CD8-positive, alpha-beta T cell (primary cell): ENCODE measurements at regions of chrX and their contacts with region 1.

Region 1: GRCh38 chrX:1537035-1537715 is at the start of gene P2RY8:
- DNase-seq: peak; percentile 65 to 91 (median 82)
- ATAC-seq: peak; percentile 76
- H3K4me3 ChIP-seq: peak within 1 kb of the TSS; percentile 71 to 98
- H3K4me3 Mint-ChIP-seq: peak within 1 kb of the TSS; percentile 98
- H3K27ac ChIP-seq: peak within 1 kb of the TSS; percentile 91 to 92
- H3K27ac Mint-ChIP-seq: peak within 1 kb of the TSS; percentile 98
- H3K4me1 ChIP-seq: peaks cover 15% of the 10 kb centered on the region
- H3K4me1 Mint-ChIP-seq: peaks cover 20% of the 10 kb centered on the region
- H3K27me3 ChIP-seq: no peaks in the 10 kb centered on the region
- H3K27me3 Mint-ChIP-seq: no peaks in the 10 kb centered on the region
- CTCF ChIP-seq: no peak
- total RNA-seq, gene P2RY8: 196 to 197 TPM

Region 2: GRCh38 chrX:1246816-1247215 is 290.4 kb before region 1 on chrX:
- CTCF ChIA-PET with region 1: no interaction called
- POLR2A ChIA-PET with region 1: no interaction called
- intact Hi-C with region 1: loop called in 1 of 2 experiments (anchors 5 kb)
- DNase-seq: peak; percentile 59 to 89 (median 74)
- ATAC-seq: peak; percentile 67
- H3K4me3 ChIP-seq: no peak overlapping the region
- H3K4me3 Mint-ChIP-seq: no peak overlapping the region
- H3K27ac ChIP-seq: no peak overlapping the region
- H3K27ac Mint-ChIP-seq: peak overlapping the region; percentile 27
- H3K4me1 ChIP-seq: peaks cover 16% of the 10 kb centered on the region
- H3K4me1 Mint-ChIP-seq: peaks cover 15% of the 10 kb centered on the region
- H3K27me3 ChIP-seq: no peaks in the 10 kb centered on the region
- H3K27me3 Mint-ChIP-seq: no peaks in the 10 kb centered on the region
- CTCF ChIP-seq: peak; percentile 75

Region 3: DNA sequence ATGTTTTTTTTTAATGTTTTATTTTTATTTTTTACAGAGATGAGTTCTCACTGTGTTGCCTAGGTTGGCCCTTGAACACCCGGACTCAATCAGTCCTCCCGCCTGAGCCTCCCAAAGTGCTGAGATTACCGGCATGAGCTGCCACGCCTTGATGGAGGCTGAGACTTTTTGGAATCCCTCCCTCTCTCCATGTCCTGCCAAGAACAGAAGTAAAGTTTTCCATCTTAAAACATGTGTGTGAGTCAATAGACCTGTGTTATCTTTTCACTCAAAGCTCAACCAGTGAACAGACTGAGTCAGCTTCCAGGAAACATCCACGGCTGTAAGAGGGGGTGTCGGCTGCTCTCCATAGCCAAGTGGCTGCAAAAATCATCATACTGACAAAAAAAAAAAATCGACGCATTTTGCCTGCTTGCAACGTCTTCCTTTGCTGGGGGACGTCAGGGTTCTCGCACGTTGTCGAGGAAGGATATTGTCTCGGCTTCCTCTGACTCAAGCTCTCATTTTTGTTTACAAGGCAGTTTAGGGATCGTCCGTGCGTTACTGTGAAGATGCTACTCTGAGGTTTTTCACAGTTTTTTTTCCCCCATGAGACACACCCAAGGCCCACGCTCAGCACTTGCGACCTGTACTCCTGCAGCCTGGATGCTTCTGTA is 74.5 kb before region 1 on chrX:
- CTCF ChIA-PET with region 1: no interaction called
- POLR2A ChIA-PET with region 1: no interaction called
- intact Hi-C with region 1: loop called (anchors 2 kb)
- DNase-seq: peak; percentile 56 to 98 (median 75)
- ATAC-seq: peak; percentile 75
- H3K4me3 ChIP-seq: peak overlapping the region in 1 of 2 experiments; percentile 5
- H3K4me3 Mint-ChIP-seq: peak overlapping the region; percentile 23
- H3K27ac ChIP-seq: peak overlapping the region; percentile 63 to 92
- H3K27ac Mint-ChIP-seq: peak overlapping the region; percentile 95
- H3K4me1 ChIP-seq: peaks cover 54% of the 10 kb centered on the region
- H3K4me1 Mint-ChIP-seq: peaks cover 57% of the 10 kb centered on the region
- H3K27me3 ChIP-seq: no peaks in the 10 kb centered on the region
- H3K27me3 Mint-ChIP-seq: no peaks in the 10 kb centered on the region
- CTCF ChIP-seq: no peak

Region 4: DNA sequence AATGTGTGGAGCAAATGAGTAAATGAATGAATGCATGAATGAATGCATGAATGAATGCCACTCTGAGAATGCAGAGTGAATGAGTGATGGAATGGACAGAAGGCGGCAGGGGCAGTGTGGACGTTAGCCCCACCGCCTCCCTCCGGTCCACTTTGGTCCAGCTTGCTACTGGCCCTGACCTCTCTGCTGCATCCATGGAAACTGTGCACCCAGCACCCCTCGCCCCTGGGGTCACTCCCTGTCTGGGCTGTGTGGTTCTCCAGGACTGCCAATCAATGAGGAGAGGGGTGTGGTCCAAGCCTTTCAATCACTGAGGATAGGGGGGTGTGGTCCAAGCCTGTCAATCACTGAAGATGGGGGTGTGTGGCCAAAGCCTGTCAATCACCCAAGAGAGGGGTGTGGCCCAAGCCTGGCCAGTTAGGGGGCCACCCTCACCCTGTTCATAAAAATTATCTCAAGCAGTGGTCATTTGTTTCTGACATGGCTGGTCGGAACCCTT is 45.3 kb before region 1 on chrX:
- CTCF ChIA-PET with region 1: no interaction called
- POLR2A ChIA-PET with region 1: no interaction called
- intact Hi-C with region 1: loop called (anchors 1 to 5 kb)
- DNase-seq: peak in 5 of 9 experiments; percentile 41 to 78 (median 68)
- ATAC-seq: peak; percentile 64
- H3K4me3 ChIP-seq: no peak overlapping the region
- H3K4me3 Mint-ChIP-seq: no peak overlapping the region
- H3K27ac ChIP-seq: peak overlapping the region in 1 of 2 experiments; percentile 8
- H3K27ac Mint-ChIP-seq: peak overlapping the region; percentile 80
- H3K4me1 ChIP-seq: peaks cover 11% of the 10 kb centered on the region
- H3K4me1 Mint-ChIP-seq: peaks cover 23% of the 10 kb centered on the region
- H3K27me3 ChIP-seq: no peaks in the 10 kb centered on the region
- H3K27me3 Mint-ChIP-seq: no peaks in the 10 kb centered on the region
- CTCF ChIP-seq: no peak

Region 5: GRCh38 chrX:1554469-1555210 is 17.5 kb after region 1 on chrX:
- CTCF ChIA-PET with region 1: no interaction called
- POLR2A ChIA-PET with region 1: no interaction called
- intact Hi-C with region 1: loop called (anchors 1 to 2 kb)
- DNase-seq: peak; percentile 40 to 86 (median 73)
- ATAC-seq: peak; percentile 97
- H3K4me3 ChIP-seq: peak overlapping the region in 1 of 2 experiments; percentile 4
- H3K4me3 Mint-ChIP-seq: peak overlapping the region; percentile 66
- H3K27ac ChIP-seq: peak overlapping the region; percentile 61 to 81
- H3K27ac Mint-ChIP-seq: peak overlapping the region; percentile 96
- H3K4me1 ChIP-seq: peaks cover 52% of the 10 kb centered on the region
- H3K4me1 Mint-ChIP-seq: peaks cover 57% of the 10 kb centered on the region
- H3K27me3 ChIP-seq: no peaks in the 10 kb centered on the region
- H3K27me3 Mint-ChIP-seq: no peaks in the 10 kb centered on the region
- CTCF ChIP-seq: no peak

Region 6: GRCh38 chrX:1591102-1591900 is 54.1 kb after region 1 on chrX and contains the start of gene AKAP17A:
- CTCF ChIA-PET with region 1: no interaction called
- POLR2A ChIA-PET with region 1: no interaction called
- intact Hi-C with region 1: loop called (anchors 1 to 2 kb)
- DNase-seq: peak; percentile 95 to 100 (median 98)
- ATAC-seq: peak; percentile 88
- H3K4me3 ChIP-seq: peak within 1 kb of the TSS; percentile 82 to 85
- H3K4me3 Mint-ChIP-seq: peak within 1 kb of the TSS; percentile 90
- H3K27ac ChIP-seq: peak within 1 kb of the TSS; percentile 71 to 79
- H3K27ac Mint-ChIP-seq: peak within 1 kb of the TSS; percentile 91
- H3K4me1 ChIP-seq: peaks cover 35% of the 10 kb centered on the region
- H3K4me1 Mint-ChIP-seq: peaks cover 39% of the 10 kb centered on the region
- H3K27me3 ChIP-seq: no peaks in the 10 kb centered on the region
- H3K27me3 Mint-ChIP-seq: no peaks in the 10 kb centered on the region
- CTCF ChIP-seq: no peak
- total RNA-seq, gene AKAP17A: 193 to 209 TPM

Region 7: DNA sequence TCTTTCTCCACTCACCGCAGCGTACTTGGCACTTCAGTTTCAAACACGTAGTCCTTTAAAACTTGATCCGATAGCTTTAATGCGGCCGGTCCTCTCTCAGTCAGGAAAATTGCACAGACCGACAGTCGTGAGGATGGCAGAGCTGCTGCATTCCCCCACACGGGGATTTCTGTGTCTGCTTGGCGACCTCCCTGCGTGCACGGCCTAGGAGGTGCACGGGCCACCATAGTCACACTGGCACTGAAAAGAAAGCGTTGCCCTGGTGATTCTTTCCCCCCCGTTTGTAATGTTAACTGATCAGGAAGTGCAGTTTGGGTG is 64.6 kb after region 1 on chrX:
- CTCF ChIA-PET with region 1: no interaction called
- POLR2A ChIA-PET with region 1: no interaction called
- intact Hi-C with region 1: no loop called
- DNase-seq: no peak
- ATAC-seq: no peak
- H3K4me3 ChIP-seq: no peak overlapping the region
- H3K4me3 Mint-ChIP-seq: no peak overlapping the region
- H3K27ac ChIP-seq: no peak overlapping the region
- H3K27ac Mint-ChIP-seq: no peak overlapping the region
- H3K4me1 ChIP-seq: no peaks in the 10 kb centered on the region
- H3K4me1 Mint-ChIP-seq: peaks cover 8% of the 10 kb centered on the region
- H3K27me3 ChIP-seq: no peaks in the 10 kb centered on the region
- H3K27me3 Mint-ChIP-seq: no peaks in the 10 kb centered on the region
- CTCF ChIP-seq: no peak